ENCODE measurements at regions of chr11 and their contacts with region 1.

Region 1: DNA sequence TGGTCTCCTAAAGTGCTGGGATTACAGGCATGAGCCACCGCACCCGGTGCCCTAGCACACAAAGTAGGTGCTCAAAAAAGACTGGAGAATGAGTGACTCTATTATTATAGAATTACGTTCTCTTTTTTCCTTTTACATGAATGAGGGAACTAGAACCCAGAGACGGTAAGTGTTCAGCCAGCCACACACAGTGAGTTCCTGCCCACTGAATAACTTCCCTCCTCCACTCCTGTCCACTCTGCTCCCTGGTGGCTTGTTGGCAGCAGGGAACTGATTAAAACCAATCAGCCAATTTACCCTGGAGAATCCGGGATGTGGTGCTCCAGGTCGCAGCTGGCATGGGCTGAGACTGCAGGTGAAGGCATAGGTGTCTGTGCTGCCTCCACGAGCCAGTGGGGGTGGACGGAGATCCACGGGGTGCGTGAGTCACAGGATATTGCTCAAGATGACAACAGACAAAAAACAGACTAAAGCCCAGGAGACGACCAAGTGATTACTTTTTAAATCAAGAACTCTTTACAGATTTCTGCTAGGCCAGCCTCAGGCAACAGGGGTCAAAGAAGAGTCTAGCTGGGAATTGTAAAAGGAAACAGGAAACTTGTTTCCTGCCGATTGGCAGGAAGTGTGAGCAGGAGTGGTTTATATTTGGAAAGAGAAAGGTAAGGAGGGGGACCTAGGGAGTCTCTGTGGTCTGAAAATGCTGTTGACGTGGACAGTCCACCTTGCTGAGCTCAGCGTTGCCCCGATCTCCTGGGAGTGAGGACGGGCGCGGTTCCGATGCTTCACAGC is 95.2 kb upstream of the TP53I11 start:
- DNase-seq: peak in 4 of 5 donors; percentile 55 to 70 (median 58)
- ATAC-seq: peak in 3 of 4 donors; percentile 58 to 63 (median 59)
- H3K4me3 ChIP-seq: peak overlapping the region in 1 of 12 donors; percentile 1
- H3K27ac ChIP-seq: peak overlapping the region in 11 of 12 donors; percentile 32 to 81 (median 63)
- H3K4me1 ChIP-seq: peaks cover 8 to 55% (median 43%) of the 10 kb centered on the region in 12 donors
- H3K27me3 ChIP-seq: no peaks in the 10 kb centered on the region
- CTCF ChIP-seq: peak in 1 of 12 donors; percentile 5
- POLR2A ChIP-seq: no peak

Region 2: DNA sequence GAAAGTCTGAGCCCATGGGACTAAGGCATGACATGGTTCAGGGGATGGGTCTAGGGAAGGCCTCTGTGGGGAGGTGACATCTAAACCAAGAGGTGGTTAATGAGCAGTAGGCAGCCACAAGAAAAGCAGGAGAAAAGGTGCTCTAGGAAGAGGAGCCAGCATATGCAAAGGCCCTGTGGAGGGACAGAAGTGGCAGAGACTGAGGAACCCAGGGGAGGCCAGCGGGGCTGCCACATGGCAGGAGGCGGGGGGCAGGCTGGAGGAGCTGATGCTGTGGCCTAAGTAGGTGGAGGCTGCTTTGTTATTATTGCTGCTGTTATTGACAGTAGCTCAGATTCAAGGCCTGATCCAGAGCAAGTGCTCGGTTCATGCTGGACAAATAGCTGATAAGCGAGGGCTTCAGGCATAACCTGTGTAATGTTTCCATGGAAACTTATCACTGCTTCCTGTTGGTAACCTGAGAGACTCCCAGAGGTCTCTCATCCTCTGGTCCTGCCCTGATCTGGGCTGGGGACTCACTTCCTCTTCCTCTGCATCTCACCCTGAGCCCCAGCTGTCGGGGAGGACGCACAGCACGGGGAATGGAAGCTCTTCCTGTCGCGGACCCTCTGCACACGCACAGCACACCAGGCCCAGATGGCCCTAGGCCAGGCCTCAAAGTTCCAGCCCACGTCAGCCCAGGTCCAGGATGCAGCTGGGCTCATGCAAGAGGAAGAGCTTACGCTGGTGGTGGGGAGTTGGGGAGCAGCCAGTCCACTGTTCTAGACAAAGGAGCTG is 20.0 kb before region 1 on chr11:
- intact Hi-C with region 1: loop called in 1 of 10 experiments (anchors 2 kb)
- DNase-seq: peak; percentile 66 to 88 (median 87)
- ATAC-seq: peak; percentile 64 to 93 (median 70)
- H3K4me3 ChIP-seq: no peak overlapping the region
- H3K27ac ChIP-seq: peak overlapping the region in 10 of 12 donors; percentile 16 to 85 (median 68)
- H3K4me1 ChIP-seq: peaks cover 10 to 66% (median 38%) of the 10 kb centered on the region in 12 donors
- H3K27me3 ChIP-seq: no peaks in the 10 kb centered on the region
- CTCF ChIP-seq: no peak
- POLR2A ChIP-seq: no peak